ENCODE measurements at regions of chr3 and their contacts with region 1.

Region 1: GRCh38 chr3:42880601-42881451 is 5.1 kb upstream of the CYP8B1 start:
- DNase-seq: peak; percentile 72
- H3K4me3 ChIP-seq: peak overlapping the region; percentile 59 to 71 (median 63)
- H3K27ac ChIP-seq: no peak overlapping the region
- H3K4me1 ChIP-seq: peaks cover 10% of the 10 kb centered on the region
- H3K27me3 ChIP-seq: no peaks in the 10 kb centered on the region
- CTCF ChIP-seq: peak; percentile 72 to 91

Region 2: GRCh38 chr3:42547401-42547945 is 333.4 kb before region 1 on chr3:
- CTCF ChIA-PET with region 1: no interaction called
- dilution Hi-C with region 1: no loop called
- in situ Hi-C with region 1: no loop called
- intact Hi-C with region 1: loop called (anchors 5 kb)
- DNase-seq: peak; percentile 36
- H3K4me3 ChIP-seq: no peak overlapping the region
- H3K27ac ChIP-seq: no peak overlapping the region
- H3K4me1 ChIP-seq: no peaks in the 10 kb centered on the region
- H3K27me3 ChIP-seq: no peaks in the 10 kb centered on the region
- CTCF ChIP-seq: peak; percentile 94 to 98

Region 3: DNA sequence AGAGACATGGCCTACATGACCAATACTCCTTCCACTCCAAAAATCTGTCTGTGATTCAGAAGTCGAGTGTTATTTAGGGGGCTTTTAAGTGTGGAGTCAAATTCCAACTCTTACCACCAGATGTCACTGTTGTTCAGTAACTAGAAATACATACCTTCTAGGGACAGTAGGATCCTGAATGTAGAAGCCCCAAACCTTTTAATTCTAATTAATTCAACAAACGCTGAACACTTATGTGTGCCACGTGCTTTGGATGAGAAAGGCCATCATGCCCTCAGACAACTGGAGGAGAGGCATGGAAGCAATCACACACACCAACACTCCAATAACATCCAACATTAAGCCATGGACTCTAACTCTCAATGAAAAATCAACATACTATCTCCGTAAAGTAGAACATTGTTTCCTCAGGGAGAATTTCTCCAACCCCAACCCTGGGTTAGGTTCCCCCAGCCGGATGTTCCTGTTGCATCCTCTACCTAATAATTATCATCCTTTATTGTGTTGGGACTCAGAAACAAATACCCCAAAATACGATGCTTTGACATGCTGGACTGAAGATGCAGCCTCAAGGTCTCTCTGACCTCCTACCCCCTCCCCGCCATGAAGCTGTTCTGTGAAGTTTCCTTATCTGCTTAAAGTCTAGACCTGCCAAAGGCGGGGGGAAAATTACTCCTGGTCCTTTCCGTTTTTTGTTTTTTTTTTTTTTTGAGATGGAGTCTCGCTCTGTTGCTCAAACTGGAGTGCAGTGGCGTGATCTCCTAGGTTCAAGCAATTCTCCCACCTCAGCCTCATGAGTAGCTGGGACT is 99.7 kb before region 1 on chr3:
- CTCF ChIA-PET with region 1: no interaction called
- dilution Hi-C with region 1: no loop called
- in situ Hi-C with region 1: loop called in 1 of 2 experiments (anchors 10 kb)
- intact Hi-C with region 1: loop called (anchors 1 kb)
- DNase-seq: peak; percentile 43
- H3K4me3 ChIP-seq: no peak overlapping the region
- H3K27ac ChIP-seq: no peak overlapping the region
- H3K4me1 ChIP-seq: peaks cover 11% of the 10 kb centered on the region
- H3K27me3 ChIP-seq: no peaks in the 10 kb centered on the region
- CTCF ChIP-seq: peak; percentile 63 to 65

Region 4: DNA sequence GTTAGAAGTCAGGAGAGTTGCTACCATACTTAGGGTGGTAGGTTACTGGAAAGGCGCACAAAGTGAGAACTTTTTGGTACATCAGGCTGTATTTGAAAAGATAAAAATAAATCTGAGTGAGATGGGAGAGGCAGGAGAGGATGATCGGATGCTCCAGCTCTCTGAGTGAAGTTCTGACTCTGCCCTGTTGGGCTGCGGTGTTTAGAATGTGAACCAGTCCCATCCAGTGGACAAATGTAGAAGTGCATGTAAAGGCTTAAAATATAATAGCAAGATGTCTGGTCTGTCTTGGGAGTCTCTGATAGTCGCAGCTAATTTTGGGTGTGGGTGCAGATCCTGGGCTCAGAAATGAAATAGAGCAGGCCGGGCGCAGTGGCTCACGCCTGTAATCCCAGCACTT is 41.2 kb before region 1 on chr3:
- CTCF ChIA-PET with region 1: no interaction called
- dilution Hi-C with region 1: no loop called
- in situ Hi-C with region 1: no loop called
- intact Hi-C with region 1: loop called (anchors 2 kb)
- DNase-seq: peak; percentile 60
- H3K4me3 ChIP-seq: no peak overlapping the region
- H3K27ac ChIP-seq: no peak overlapping the region
- H3K4me1 ChIP-seq: no peaks in the 10 kb centered on the region
- H3K27me3 ChIP-seq: no peaks in the 10 kb centered on the region
- CTCF ChIP-seq: peak; percentile 77 to 86